ENCODE measurements at regions of chr19 and their contacts with region 1.

Region 1: DNA sequence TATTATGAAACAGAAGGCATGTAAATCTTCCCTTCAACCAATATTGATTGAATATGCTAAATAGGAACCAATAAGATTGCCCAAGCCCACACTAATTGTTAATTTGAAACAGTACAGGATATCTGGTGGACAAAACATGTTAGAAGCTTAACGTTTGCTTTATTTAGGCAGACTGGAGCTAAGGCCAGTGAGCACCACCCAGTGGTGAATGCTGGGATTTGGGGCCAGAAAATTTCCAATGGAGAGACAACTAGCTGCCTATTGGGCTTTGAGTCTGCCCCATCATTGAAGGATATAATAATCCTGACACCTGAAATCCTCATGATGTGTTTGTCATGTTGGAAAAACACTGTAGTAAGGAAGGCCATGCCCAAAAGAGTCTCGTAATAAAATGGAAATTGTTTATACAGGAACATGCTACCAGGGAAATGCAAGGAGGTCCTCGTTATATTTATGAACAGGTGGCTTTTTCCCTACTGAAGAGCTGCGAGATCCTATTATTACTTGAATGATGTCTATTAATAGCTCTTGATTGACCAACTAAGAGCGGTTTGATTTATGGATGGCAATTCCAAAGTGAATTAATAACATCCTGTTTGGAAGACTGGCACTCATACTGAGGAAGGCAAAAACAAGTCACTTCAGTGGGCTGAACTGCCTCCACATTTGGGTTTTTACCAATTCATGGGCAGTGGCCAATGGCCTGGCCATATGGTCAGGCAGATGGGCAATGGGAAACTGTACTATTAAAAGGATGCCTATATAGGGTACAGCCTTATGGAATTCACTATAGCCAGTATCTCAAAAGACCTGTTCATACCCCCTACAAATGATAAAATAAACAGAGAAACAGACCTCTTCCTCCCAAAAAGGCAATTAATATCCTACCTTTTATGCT is 8.7 kb downstream of the SIGLECL1 start:
- DNase-seq: peak; percentile 44
- H3K4me3 ChIP-seq: no peak overlapping the region
- H3K27ac ChIP-seq: no peak overlapping the region
- H3K4me1 ChIP-seq: no peaks in the 10 kb centered on the region
- H3K27me3 ChIP-seq: no peaks in the 10 kb centered on the region
- CTCF ChIP-seq: peak; percentile 52 to 70
- POLR2A ChIP-seq: no peak

Region 2: GRCh38 chr19:51158474-51159129 is 101.0 kb before region 1 on chr19:
- CTCF ChIA-PET with region 1: interaction called, 5 read pairs
- POLR2A ChIA-PET with region 1: no interaction called
- dilution Hi-C with region 1: no loop called
- intact Hi-C with region 1: loop called (anchors 1 kb)
- DNase-seq: peak; percentile 12
- H3K4me3 ChIP-seq: no peak overlapping the region
- H3K27ac ChIP-seq: no peak overlapping the region
- H3K4me1 ChIP-seq: no peaks in the 10 kb centered on the region
- H3K27me3 ChIP-seq: peaks cover 0 to 4% of the 10 kb centered on the region in 2 experiments
- CTCF ChIP-seq: peak; percentile 60 to 79
- POLR2A ChIP-seq: no peak

Region 3: DNA sequence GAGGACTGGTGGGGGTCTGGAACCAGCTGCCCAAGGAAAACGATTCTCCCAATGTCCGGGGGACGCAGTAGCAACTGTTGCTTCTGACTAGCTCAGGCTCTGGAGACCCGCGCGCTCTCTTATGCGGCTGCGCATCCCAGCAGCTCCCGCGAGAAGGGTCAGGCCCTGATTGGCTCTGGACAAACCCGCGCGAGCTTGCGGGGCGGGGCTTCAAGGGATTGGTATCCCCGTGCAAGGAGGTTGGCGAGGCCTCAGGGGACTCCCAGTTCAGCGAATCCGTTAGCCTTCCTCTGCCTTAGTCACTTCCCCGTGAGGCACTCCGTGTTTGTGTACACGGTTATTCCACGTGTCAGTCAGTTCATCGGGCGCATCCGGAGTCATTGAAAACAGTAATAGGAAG is 11.5 kb after region 1 on chr19:
- CTCF ChIA-PET with region 1: interaction called, 20 read pairs
- POLR2A ChIA-PET with region 1: no interaction called
- dilution Hi-C with region 1: no loop called
- intact Hi-C with region 1: no loop called
- DNase-seq: no peak
- H3K4me3 ChIP-seq: no peak overlapping the region
- H3K27ac ChIP-seq: no peak overlapping the region
- H3K4me1 ChIP-seq: no peaks in the 10 kb centered on the region
- H3K27me3 ChIP-seq: no peaks in the 10 kb centered on the region
- CTCF ChIP-seq: no peak
- POLR2A ChIP-seq: no peak

Measured in endothelial cell of umbilical vein (primary cell).